Activated CD8-positive, alpha-beta T cell treated with anti-CD3 and anti-CD28 coated beads for 36 hours (primary cell): ENCODE measurements at regions of chr15 and their contacts with region 1.

Region 1: DNA sequence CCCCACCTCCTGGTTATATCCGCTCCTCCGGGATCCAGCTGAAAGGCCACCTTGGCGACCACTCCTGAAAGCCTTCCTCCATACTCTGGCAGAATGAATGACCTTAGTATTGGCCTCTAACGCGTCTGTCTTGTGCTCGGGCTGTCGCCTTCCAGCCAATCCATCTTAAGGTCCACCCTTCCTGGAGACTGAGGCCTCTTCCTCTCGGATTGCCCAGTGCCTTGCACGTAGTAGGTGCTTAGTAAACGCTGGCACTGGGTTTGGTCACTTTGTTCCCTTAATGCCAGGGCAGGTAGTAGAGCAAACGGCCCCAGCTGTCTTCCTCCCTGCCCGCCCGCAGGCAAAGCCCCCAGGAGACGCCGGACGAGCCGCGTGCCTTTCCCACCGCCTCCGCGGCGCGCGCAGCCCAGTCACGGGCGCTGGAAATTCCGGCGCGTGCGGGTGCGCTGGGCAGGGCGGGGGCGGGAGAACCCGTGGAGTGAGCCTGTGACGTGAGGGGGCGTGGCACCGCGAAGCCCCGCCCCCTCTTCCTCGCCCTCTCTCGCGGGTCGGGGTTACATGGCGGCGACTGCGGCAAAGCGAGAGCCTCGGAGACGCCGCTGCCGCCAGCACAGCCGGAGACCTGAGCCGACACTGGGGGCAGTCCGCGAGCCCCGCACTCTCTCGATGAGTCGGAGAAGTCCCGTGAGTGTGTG is at the start of gene MAPK6:
- DNase-seq: peak; percentile 95
- ATAC-seq: peak; percentile 82
- H3K4me3 Mint-ChIP-seq: peak within 1 kb of the TSS; percentile 90
- H3K27ac Mint-ChIP-seq: peak within 1 kb of the TSS; percentile 97
- H3K4me1 Mint-ChIP-seq: peaks cover 34% of the 10 kb centered on the region
- H3K27me3 Mint-ChIP-seq: no peaks in the 10 kb centered on the region
- CTCF ChIP-seq: no peak
- total RNA-seq, gene MAPK6: 40.5 to 42.2 TPM

Region 2: GRCh38 chr15:51726351-51727073 is 292.3 kb before region 1 on chr15:
- CTCF ChIA-PET with region 1: no interaction called
- POLR2A ChIA-PET with region 1: no interaction called
- intact Hi-C with region 1: no loop called
- DNase-seq: peak; percentile 71
- ATAC-seq: peak; percentile 89
- H3K4me3 Mint-ChIP-seq: no peak overlapping the region
- H3K27ac Mint-ChIP-seq: peak overlapping the region; percentile 45
- H3K4me1 Mint-ChIP-seq: peaks cover 67% of the 10 kb centered on the region
- H3K27me3 Mint-ChIP-seq: no peaks in the 10 kb centered on the region
- CTCF ChIP-seq: no peak

Region 3: GRCh38 chr15:51982013-51982769 is 36.6 kb before region 1 on chr15:
- CTCF ChIA-PET with region 1: no interaction called
- POLR2A ChIA-PET with region 1: interaction called, 4 read pairs
- intact Hi-C with region 1: loop called (anchors 5 kb)
- DNase-seq: peak; percentile 76
- ATAC-seq: peak; percentile 95
- H3K4me3 Mint-ChIP-seq: peak overlapping the region; percentile 70
- H3K27ac Mint-ChIP-seq: peak overlapping the region; percentile 86
- H3K4me1 Mint-ChIP-seq: peaks cover 14% of the 10 kb centered on the region
- H3K27me3 Mint-ChIP-seq: no peaks in the 10 kb centered on the region
- CTCF ChIP-seq: peak; percentile 93

Region 4: GRCh38 chr15:52005748-52006701 is 12.8 kb before region 1 on chr15:
- CTCF ChIA-PET with region 1: interaction called, 5 read pairs
- POLR2A ChIA-PET with region 1: interaction called, 30 read pairs
- intact Hi-C with region 1: no loop called
- DNase-seq: peak; percentile 51
- ATAC-seq: peak; percentile 89
- H3K4me3 Mint-ChIP-seq: peak overlapping the region; percentile 27
- H3K27ac Mint-ChIP-seq: peak overlapping the region; percentile 80
- H3K4me1 Mint-ChIP-seq: peaks cover 50% of the 10 kb centered on the region
- H3K27me3 Mint-ChIP-seq: no peaks in the 10 kb centered on the region
- CTCF ChIP-seq: no peak